Right ventricle myocardium superior (tissue), 1 donor: ENCODE measurements at regions of chr1 and their contacts with region 1.

Region 1: GRCh38 chr1:116485071-116485735 is 85.6 kb downstream of the CD58 start:
- DNase-seq: peak; percentile 95
- ATAC-seq: peak; percentile 88

Region 2: DNA sequence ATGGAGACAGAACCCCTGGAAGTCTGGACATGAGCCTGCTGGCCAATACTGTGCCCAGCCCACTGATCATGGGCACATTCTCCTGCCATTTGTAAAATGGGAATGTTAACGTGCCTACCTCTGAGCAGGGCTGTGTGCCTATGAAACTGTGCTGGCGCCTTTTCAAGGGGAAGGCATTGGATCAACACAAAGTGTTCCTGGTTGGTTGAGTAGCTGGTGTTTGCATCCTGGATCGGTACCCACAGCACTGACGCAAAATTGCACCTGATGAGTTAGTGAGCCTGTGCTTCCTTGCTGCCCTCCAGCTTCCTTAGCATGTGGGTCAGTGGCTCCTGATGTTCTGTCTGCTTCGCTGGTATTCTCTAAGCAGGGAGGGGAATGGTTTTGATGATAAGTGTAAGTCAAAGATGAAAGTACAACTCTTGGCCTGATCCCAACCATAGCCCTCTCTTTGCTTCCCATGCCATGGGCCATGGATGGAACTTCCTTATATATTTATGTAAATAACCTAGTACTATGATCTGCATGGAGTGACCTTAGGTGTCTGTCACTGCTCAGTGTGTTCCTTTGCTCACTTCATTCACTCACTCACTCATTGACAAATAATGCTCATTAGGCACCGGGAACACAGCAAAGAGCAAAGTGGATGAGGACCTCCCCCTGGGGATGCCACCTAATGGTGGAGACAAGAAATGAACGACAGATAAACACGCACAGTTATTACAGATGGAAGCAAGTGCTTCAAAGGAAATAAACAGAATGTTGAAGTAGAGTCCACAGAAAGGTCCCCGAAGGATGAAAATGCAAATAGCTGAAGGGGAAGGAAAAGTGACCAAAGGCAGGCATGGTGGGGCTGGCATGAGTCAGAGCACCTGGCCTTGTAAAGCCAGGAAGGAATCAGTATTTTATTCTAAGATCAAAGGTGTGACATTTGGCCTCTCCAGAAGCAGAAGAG is 351.2 kb before region 1 on chr1:
- intact Hi-C with region 1: loop called (anchors 5 kb)
- DNase-seq: no peak
- ATAC-seq: no peak

Region 3: GRCh38 chr1:116151739-116152576 is 333.2 kb before region 1 on chr1:
- intact Hi-C with region 1: loop called (anchors 2 kb)
- DNase-seq: peak; percentile 84
- ATAC-seq: peak; percentile 97

Region 4: DNA sequence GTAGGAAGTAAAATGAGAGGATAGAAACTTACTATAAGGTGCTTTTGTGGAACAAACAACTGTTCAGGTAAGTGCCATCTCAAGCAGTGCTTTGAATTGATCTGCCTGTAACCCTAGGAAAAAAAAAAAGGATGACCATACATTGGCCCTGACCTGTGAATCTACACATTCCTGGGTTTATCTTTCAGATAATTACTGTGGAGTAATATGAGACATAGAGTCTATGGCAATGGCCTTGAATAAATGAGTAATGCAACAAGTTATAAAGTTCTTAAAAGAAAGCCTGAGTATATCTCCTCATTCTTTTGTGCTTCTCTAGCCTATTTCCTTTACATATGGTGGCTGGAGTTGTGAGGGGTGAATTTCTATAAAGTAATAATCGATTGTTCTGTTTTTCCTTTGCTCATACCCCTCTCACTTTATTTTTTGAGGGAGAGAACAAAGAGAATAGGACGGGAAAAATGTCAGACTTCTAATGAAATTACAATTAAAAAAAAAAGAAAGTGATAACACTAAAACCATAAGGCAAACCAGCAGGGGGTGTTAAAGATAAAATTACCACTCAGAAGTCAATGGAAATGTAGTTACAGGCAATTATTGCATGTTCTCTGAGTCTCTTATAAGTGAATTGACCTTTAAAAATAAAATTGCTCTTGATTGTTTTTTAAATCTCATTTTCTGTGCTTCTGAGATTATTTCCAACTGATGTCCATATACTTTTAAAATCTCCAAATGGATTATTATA is 124.6 kb before region 1 on chr1:
- intact Hi-C with region 1: loop called (anchors 5 kb)
- DNase-seq: no peak
- ATAC-seq: peak; percentile 42